ENCODE measurements at regions of chr2 and their contacts with region 1.

Region 1: DNA sequence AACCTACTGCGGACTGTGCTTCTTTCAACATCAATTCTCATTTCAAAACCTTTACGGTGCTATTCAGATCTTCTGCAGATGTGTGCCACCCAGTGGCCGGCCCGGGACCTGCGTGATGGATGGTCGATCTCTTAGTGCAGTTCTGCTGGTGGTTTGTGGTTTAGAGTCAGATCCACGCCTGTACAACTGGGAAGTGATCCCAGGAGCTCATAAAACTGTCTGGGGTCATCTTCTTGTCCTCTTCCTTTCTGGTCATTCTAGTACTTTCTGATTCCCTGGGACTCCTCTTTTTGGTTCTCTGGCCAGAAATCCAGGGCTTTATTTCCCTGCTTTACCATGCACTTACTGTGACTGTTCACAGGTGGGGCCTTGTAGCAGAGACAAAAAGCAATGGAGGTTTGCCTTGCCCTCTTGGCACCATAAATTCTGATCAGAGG is 15.8 kb upstream of the SELENOI start:
- DNase-seq: peak; percentile 59
- ATAC-seq: peak; percentile 99
- H3K4me3 ChIP-seq: no peak overlapping the region
- H3K27ac ChIP-seq: no peak overlapping the region
- H3K4me1 ChIP-seq: peaks cover 4 to 9% of the 10 kb centered on the region in 2 experiments; a peak in 3 of 4 replicates
- H3K27me3 ChIP-seq: no peaks in the 10 kb centered on the region
- CTCF ChIP-seq: peak; percentile 86 to 93 (median 88)
- POLR2A ChIP-seq: no peak
- RAD21 ChIP-seq: peak; percentile 85

Region 2: DNA sequence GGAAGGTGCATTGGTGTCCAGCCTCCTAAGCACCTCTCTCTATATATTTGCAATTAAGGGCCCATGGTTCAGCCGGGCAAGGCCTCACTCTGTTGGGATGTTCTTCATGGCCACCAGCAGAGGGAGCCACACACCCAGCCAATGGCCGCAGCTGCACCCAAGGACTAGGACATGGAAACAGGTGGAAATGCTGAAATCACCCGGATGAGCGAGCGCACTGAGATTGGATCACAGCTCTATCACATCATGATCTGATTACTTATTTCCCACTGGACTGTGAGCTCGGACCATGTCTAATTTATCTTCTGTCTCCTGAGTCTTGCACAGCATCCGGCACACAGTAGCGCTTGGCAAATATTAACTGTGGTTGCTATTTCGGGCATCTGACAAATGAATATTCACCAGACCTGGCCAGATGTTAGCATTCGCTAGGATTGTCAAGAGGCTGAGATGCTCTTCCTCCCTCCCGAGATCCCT is 379.0 kb before region 1 on chr2:
- CTCF ChIA-PET with region 1: no interaction called
- POLR2A ChIA-PET with region 1: no interaction called
- RAD21 ChIA-PET with region 1: no interaction called
- intact Hi-C with region 1: loop called (anchors 5 kb)
- DNase-seq: peak; percentile 88
- ATAC-seq: peak; percentile 97
- H3K4me3 ChIP-seq: peak overlapping the region in 1 of 2 experiments; percentile 10; a peak in 2 of 4 replicates
- H3K27ac ChIP-seq: no peak overlapping the region
- H3K4me1 ChIP-seq: peaks cover 0 to 12% of the 10 kb centered on the region in 2 experiments; a peak in 1 of 4 replicates
- H3K27me3 ChIP-seq: no peaks in the 10 kb centered on the region
- CTCF ChIP-seq: peak; percentile 89 to 97 (median 93)
- POLR2A ChIP-seq: no peak
- RAD21 ChIP-seq: peak; percentile 100

Region 3: GRCh38 chr2:26235085-26235484 is 95.0 kb before region 1 on chr2:
- CTCF ChIA-PET with region 1: interaction called, 3 read pairs
- POLR2A ChIA-PET with region 1: no interaction called
- RAD21 ChIA-PET with region 1: no interaction called
- intact Hi-C with region 1: loop called (anchors 2 kb)
- DNase-seq: no peak
- ATAC-seq: peak; percentile 49; the same call in 1 of the 2 replicates
- H3K4me3 ChIP-seq: no peak overlapping the region
- H3K27ac ChIP-seq: no peak overlapping the region
- H3K4me1 ChIP-seq: no peaks in the 10 kb centered on the region
- H3K27me3 ChIP-seq: no peaks in the 10 kb centered on the region
- CTCF ChIP-seq: peak; percentile 29 to 40 (median 39); a peak in 5 of 6 replicates
- POLR2A ChIP-seq: no peak
- RAD21 ChIP-seq: peak; percentile 65

Region 4: DNA sequence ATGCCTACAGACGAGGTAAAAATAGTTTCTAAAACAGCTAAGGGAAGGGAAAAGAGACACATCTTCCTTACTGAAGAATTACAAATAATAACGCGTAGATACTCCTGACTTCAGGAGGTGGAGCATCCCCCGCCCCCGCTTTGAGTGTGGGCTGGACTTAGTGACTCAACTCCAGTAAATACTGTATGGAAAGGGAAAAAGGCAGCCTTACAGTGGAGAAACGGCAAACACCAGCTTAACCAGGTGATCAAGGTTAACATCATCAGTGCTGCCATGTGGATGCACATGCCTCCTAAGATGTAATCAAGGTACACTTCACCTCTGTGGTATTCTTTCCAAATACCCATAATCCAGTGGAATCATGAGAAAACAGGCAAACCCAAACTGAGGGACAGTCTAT is 37.5 kb before region 1 on chr2:
- CTCF ChIA-PET with region 1: no interaction called
- POLR2A ChIA-PET with region 1: interaction called, 11 read pairs
- RAD21 ChIA-PET with region 1: no interaction called
- intact Hi-C with region 1: no loop called
- DNase-seq: no peak
- ATAC-seq: peak; percentile 46; the same call in 1 of the 2 replicates
- H3K4me3 ChIP-seq: no peak overlapping the region
- H3K27ac ChIP-seq: no peak overlapping the region
- H3K4me1 ChIP-seq: peaks cover 2 to 6% of the 10 kb centered on the region in 2 experiments; a peak in 2 of 4 replicates
- H3K27me3 ChIP-seq: no peaks in the 10 kb centered on the region
- CTCF ChIP-seq: no peak
- POLR2A ChIP-seq: no peak
- RAD21 ChIP-seq: no peak

Region 5: GRCh38 chr2:26495705-26496297 is 165.7 kb after region 1 on chr2:
- CTCF ChIA-PET with region 1: no interaction called
- POLR2A ChIA-PET with region 1: no interaction called
- RAD21 ChIA-PET with region 1: no interaction called
- intact Hi-C with region 1: no loop called
- DNase-seq: no peak
- ATAC-seq: no peak
- H3K4me3 ChIP-seq: no peak overlapping the region
- H3K27ac ChIP-seq: no peak overlapping the region
- H3K4me1 ChIP-seq: no peaks in the 10 kb centered on the region
- H3K27me3 ChIP-seq: peaks cover 5% of the 10 kb centered on the region; the same call in 1 of the 2 replicates
- CTCF ChIP-seq: no peak
- POLR2A ChIP-seq: no peak
- RAD21 ChIP-seq: no peak

Measured in HCT116 (cell line).